ENCODE measurements at regions of chr10 and their contacts with region 1.

Region 1: GRCh38 chr10:117174439-117175214 is 22.7 kb upstream of the KCNK18 start:
- DNase-seq: peak; percentile 60
- H3K4me3 ChIP-seq: peak overlapping the region; percentile 63
- H3K27ac ChIP-seq: no peak overlapping the region
- H3K4me1 ChIP-seq: peaks cover 10% of the 10 kb centered on the region
- H3K27me3 ChIP-seq: peaks cover 90% of the 10 kb centered on the region
- CTCF ChIP-seq: peak; percentile 85

Region 2: DNA sequence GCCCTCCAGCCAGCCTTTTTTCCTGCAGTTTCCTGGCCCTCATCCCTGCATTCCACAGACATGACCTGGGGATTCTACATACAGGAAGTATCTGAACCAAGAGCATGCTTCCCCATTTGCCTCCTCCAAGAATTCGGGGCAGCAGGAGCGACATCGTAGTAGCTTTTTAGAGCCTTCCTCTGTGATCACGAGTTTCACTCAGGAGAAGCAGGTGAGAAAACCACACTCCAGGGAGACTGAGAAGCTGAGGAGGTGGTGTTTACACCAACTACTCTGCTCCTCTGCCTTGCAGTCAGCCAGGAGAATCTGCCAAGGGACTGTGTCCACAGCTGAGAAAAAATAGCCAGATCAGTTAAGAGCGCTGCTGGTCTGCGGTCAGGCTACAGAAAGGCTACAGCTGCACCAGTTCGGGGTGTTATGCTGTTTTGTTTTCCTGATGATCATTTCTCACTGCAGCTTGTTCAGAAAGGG is 486.4 kb before region 1 on chr10:
- intact Hi-C with region 1: loop called (anchors 10 kb)
- DNase-seq: no peak
- H3K4me3 ChIP-seq: peak overlapping the region; percentile 25
- H3K27ac ChIP-seq: peak overlapping the region; percentile 68
- H3K4me1 ChIP-seq: peaks cover 56% of the 10 kb centered on the region
- H3K27me3 ChIP-seq: no peaks in the 10 kb centered on the region
- CTCF ChIP-seq: no peak

Region 3: GRCh38 chr10:116796910-116797513 is 377.6 kb before region 1 on chr10:
- intact Hi-C with region 1: loop called (anchors 5 kb)
- DNase-seq: peak; percentile 54
- H3K4me3 ChIP-seq: no peak overlapping the region
- H3K27ac ChIP-seq: no peak overlapping the region
- H3K4me1 ChIP-seq: no peaks in the 10 kb centered on the region
- H3K27me3 ChIP-seq: peaks cover 39% of the 10 kb centered on the region
- CTCF ChIP-seq: peak; percentile 92

Region 4: DNA sequence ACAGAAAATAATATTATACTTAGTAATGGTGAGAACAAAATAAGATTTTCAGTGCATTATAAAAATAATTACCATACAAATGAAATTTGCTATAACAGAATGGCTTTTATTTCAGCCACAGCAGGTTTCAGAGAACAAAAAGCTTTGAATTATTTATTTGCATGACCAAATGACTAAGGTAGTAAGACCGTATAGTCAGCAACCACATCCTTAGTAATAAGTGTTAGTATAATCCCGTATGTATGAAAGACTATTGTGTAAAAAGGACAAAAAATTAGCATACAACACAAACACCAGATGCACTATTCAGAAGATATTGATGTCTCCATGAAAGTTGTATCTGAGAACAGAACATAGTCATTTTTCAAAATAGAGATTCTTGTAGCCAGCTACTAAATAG is 188.4 kb after region 1 on chr10:
- intact Hi-C with region 1: no loop called
- DNase-seq: no peak
- H3K4me3 ChIP-seq: no peak overlapping the region
- H3K27ac ChIP-seq: no peak overlapping the region
- H3K4me1 ChIP-seq: peaks cover 56% of the 10 kb centered on the region
- H3K27me3 ChIP-seq: no peaks in the 10 kb centered on the region
- CTCF ChIP-seq: no peak

Measured in left ventricle myocardium inferior (tissue), 1 donor.